Gastrocnemius medialis (tissue), 4 donors: ENCODE measurements at regions of chr2 and their contacts with region 1.

Region 1: DNA sequence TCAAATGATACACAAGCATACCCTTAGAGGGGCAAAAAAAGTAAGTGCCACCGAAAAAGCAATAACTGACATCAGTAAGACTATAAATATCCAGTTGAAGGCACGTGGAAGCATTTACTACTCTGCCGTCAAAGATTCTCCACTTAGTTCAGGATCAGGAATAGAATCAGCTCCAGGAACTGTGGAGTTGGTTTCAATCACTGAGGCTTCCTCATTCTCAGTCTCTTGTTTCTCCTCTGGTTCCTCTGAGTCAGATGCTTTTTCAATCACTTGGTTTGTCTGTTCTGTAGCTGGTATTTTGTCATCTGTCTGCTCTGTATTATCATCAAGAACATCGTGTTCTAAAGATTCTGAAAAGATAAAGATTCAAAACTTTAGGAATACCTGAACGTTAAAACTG is 72.2 kb downstream of the LNPK start:
- DNase-seq: peak; percentile 31 to 35
- ATAC-seq: peak; percentile 99
- H3K4me3 ChIP-seq: no peak overlapping the region
- H3K27ac ChIP-seq: peak overlapping the region; percentile 65 to 85 (median 84)
- H3K4me1 ChIP-seq: peaks cover 26 to 33% of the 10 kb centered on the region in 2 donors
- H3K27me3 ChIP-seq: no peaks in the 10 kb centered on the region
- CTCF ChIP-seq: no peak
- POLR2A ChIP-seq: peak; percentile 7 to 42

Region 2: DNA sequence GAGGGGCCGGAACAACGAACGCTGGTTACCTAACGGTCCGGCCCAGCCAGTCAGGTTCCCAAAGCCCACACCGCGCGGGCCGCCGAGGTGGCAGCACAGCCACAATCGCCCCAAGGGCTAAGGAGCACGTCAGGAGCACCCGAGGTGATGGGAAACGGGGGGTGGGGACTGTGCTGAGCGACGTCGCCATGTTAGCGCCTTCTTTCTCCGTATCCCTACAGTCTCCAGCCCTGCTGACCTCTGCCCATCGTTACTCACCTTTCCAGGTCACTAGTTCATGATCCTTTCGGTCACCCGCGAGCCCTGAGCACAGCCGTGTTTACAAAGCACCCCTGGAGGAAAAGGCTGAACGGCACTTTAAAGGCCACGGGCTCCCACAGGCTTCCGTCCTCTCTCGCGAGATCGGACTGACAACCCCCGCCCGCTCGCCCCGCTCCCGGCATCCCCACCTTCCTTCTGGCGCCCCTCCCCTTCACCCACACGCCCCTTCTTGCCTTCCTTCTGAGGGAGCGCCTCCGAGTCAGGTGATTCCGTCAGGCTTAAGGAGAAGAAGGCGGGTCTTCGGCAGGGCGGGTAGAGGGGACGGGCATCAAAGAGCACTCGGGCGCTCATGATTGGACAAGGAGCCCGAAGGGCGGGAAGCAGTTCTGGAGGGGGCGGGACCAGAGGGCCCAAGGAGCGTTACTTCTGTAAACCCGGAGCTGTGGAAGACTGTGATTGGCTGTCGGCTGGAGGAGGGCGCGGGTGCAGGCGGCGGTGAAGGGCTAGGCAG is 761.9 kb before region 1 on chr2 and contains the start of gene ATF2:
- in situ Hi-C with region 1: no loop called
- intact Hi-C with region 1: loop called (anchors 10 kb)
- DNase-seq: peak; percentile 99
- ATAC-seq: peak; percentile 95 to 97
- H3K4me3 ChIP-seq: peak within 1 kb of the TSS; percentile 82 to 95 (median 94)
- H3K27ac ChIP-seq: peak within 1 kb of the TSS; percentile 94 to 98 (median 96)
- H3K4me1 ChIP-seq: peaks cover 14 to 15% of the 10 kb centered on the region in 2 donors
- H3K27me3 ChIP-seq: no peaks in the 10 kb centered on the region
- CTCF ChIP-seq: no peak
- POLR2A ChIP-seq: peak; percentile 59 to 83
- total RNA-seq, gene ATF2: 19.5 to 28.1 (median 20.9) TPM

Region 3: GRCh38 chr2:175755169-175755568 is 174.7 kb before region 1 on chr2:
- in situ Hi-C with region 1: no loop called
- intact Hi-C with region 1: loop called (anchors 5 kb)
- DNase-seq: no peak
- ATAC-seq: no peak
- H3K4me3 ChIP-seq: no peak overlapping the region
- H3K27ac ChIP-seq: peak overlapping the region in 1 of 4 donors; percentile 64
- H3K4me1 ChIP-seq: peaks cover 0 to 4% of the 10 kb centered on the region in 2 donors
- H3K27me3 ChIP-seq: no peaks in the 10 kb centered on the region
- CTCF ChIP-seq: no peak
- POLR2A ChIP-seq: no peak